PC-9 (cell line): ENCODE measurements at regions of chr5 and their contacts with region 1.

Region 1: DNA sequence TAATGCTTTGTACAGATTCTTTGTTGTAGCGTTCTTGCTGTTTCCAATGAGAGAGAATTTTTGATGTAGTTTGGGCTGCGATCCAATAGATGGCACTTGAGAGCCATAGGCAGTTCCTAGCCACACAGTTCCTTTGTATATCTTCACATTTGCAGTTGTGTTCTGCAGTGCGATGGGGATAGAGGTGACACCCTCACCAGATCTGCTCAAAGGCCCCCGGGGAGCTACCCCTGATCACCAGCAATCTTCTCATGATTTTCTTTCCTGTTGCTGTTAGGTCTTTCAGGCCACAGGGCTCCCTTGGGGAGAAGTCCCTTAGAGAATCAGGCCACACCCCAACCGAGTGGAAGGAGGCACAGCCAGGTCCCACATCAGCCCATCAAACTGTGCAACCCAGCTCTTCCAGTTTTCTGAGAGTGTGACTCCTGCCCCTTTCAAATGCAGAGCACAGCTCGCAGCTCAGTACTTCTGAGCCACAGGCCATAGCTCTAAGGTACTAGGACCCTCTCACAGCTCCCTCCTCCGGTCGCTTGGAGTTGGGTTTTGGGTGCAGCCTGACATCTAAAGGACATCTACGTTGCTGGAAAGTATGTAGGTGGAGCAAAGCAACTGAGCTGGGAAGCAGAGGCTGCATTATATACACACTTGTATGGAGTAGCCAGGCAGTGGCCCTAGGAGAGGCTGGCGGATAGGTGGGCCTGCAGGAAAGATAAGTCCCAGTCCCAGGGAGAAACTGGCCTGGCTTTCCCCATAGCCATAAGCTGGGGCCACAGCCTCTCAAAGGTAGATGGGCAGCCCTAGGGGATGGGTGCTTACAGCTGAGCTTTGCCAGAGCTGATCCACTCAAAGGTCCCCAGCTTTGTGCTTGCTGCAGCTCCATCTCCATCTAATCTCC is 353.5 kb downstream of the SLCO4C1 start:
- DNase-seq: peak in 1 of 2 experiments; percentile 13
- H3K4me3 ChIP-seq: no peak overlapping the region
- H3K27ac ChIP-seq: no peak overlapping the region
- H3K4me1 ChIP-seq: no peaks in the 10 kb centered on the region
- H3K27me3 ChIP-seq: no peaks in the 10 kb centered on the region
- CTCF ChIP-seq: peak; percentile 72

Region 2: DNA sequence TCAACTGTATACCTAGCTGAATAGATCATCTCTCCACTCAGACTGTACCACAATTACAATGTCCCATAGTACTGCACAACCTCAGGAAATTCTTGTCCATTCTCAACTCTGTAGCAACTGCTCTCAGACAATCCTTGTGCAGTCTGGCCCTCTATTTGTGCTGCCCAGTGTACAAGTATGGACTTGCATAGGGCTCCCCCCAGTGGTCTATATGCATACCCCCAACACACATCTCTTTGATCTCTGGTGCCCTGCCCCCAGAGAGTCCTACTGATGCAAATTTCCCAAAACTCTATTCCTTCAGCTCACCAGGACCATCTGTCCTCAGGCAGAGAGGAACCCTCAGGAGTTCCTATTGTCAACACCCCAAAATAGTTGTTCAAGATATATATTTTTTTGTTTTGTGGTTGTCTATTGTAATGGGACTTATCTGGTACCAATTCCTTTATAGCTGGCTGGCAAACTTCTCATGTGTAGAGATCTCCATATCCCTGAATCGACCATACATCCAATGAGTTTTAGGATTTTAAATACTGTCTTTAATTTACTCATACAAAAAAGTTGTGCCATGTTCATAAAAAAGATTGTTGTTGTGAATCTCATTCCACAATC is 148.3 kb after region 1 on chr5:
- CTCF ChIA-PET with region 1: no interaction called
- POLR2A ChIA-PET with region 1: no interaction called
- intact Hi-C with region 1: loop called (anchors 2 kb)
- DNase-seq: peak in 1 of 2 experiments; percentile 14
- H3K4me3 ChIP-seq: no peak overlapping the region
- H3K27ac ChIP-seq: no peak overlapping the region
- H3K4me1 ChIP-seq: no peaks in the 10 kb centered on the region
- H3K27me3 ChIP-seq: no peaks in the 10 kb centered on the region
- CTCF ChIP-seq: peak; percentile 55; the same call in 1 of the 2 replicates

Region 3: GRCh38 chr5:102153003-102153759 is 210.6 kb after region 1 on chr5:
- CTCF ChIA-PET with region 1: interaction called, 5 read pairs
- POLR2A ChIA-PET with region 1: no interaction called
- intact Hi-C with region 1: loop called (anchors 1 kb)
- DNase-seq: no peak
- H3K4me3 ChIP-seq: no peak overlapping the region
- H3K27ac ChIP-seq: no peak overlapping the region
- H3K4me1 ChIP-seq: no peaks in the 10 kb centered on the region
- H3K27me3 ChIP-seq: no peaks in the 10 kb centered on the region
- CTCF ChIP-seq: peak; percentile 62

Region 4: GRCh38 chr5:102223542-102224477 is 281.2 kb after region 1 on chr5:
- CTCF ChIA-PET with region 1: no interaction called
- POLR2A ChIA-PET with region 1: no interaction called
- intact Hi-C with region 1: loop called (anchors 5 kb)
- DNase-seq: no peak
- H3K4me3 ChIP-seq: no peak overlapping the region
- H3K27ac ChIP-seq: no peak overlapping the region
- H3K4me1 ChIP-seq: no peaks in the 10 kb centered on the region
- H3K27me3 ChIP-seq: no peaks in the 10 kb centered on the region
- CTCF ChIP-seq: peak; percentile 84